Astrocyte of the cerebellum (primary cell): ENCODE measurements at regions of chr3 and their contacts with region 1.

Region 1: DNA sequence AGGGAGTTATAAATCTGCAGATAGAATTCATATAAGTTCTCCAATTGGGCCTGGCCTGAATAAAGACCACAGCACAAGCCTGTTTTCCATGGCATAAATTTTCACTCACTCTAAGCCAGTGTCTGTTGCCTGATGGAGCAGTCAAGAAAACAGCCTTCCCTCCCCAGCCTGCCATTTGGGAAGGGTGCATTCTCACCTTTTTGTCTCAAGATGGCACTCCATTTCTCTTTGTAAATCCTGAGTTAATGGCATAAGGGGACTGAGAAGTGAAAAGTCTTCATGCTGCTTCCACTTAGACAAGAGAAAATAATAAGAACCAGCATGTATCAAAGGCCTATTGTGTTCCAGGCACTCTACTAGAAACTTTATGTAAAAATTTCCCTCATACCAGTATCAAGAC is 115.6 kb upstream of the MANF start:
- DNase-seq: no peak
- H3K4me3 ChIP-seq: no peak overlapping the region
- CTCF ChIP-seq: no peak

Region 2: GRCh38 chr3:50930371-50931208 is 338.9 kb before region 1 on chr3:
- in situ Hi-C with region 1: loop called (anchors 10 kb)
- DNase-seq: no peak
- H3K4me3 ChIP-seq: no peak overlapping the region
- CTCF ChIP-seq: no peak